Breast epithelium (tissue), 4 donors: ENCODE measurements at regions of chr1 and their contacts with region 1.

Region 1: GRCh38 chr1:174433451-174433850 is 14.3 kb upstream of the GPR52 start:
- DNase-seq: no peak
- H3K4me3 ChIP-seq: no peak overlapping the region
- H3K27ac ChIP-seq: no peak overlapping the region
- H3K4me1 ChIP-seq: no peaks in the 10 kb centered on the region
- H3K27me3 ChIP-seq: no peaks in the 10 kb centered on the region
- CTCF ChIP-seq: no peak
- POLR2A ChIP-seq: no peak

Region 2: GRCh38 chr1:172951730-172952365 is 1481.6 kb before region 1 on chr1:
- intact Hi-C with region 1: loop called (anchors 10 kb)
- DNase-seq: peak in 1 of 2 donors; percentile 39
- H3K4me3 ChIP-seq: no peak overlapping the region
- H3K27ac ChIP-seq: no peak overlapping the region
- H3K4me1 ChIP-seq: peaks cover 0 to 9% of the 10 kb centered on the region in 2 donors
- H3K27me3 ChIP-seq: no peaks in the 10 kb centered on the region
- CTCF ChIP-seq: no peak
- POLR2A ChIP-seq: no peak

Region 3: DNA sequence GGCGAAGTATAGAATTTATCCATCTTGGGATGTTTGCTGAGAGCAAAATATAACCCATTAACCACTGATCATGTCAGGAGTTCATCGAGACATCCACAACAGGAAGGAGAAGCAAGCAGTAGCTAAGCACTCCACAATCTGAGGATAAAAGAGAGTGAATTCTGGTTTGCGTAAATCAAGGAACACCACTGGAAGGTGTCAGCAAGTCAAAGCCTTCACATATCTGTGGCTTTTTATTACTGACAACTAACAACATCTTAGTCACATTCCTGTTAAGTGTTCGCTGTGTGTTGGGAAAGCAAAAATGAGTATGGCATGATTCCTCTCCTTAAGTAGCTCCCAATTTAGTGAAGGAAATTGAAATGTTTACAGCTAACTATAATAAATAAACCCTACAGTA is 653.5 kb before region 1 on chr1:
- intact Hi-C with region 1: no loop called
- DNase-seq: no peak
- H3K4me3 ChIP-seq: no peak overlapping the region
- H3K27ac ChIP-seq: no peak overlapping the region
- H3K4me1 ChIP-seq: no peaks in the 10 kb centered on the region
- H3K27me3 ChIP-seq: no peaks in the 10 kb centered on the region
- CTCF ChIP-seq: no peak
- POLR2A ChIP-seq: no peak

Region 4: DNA sequence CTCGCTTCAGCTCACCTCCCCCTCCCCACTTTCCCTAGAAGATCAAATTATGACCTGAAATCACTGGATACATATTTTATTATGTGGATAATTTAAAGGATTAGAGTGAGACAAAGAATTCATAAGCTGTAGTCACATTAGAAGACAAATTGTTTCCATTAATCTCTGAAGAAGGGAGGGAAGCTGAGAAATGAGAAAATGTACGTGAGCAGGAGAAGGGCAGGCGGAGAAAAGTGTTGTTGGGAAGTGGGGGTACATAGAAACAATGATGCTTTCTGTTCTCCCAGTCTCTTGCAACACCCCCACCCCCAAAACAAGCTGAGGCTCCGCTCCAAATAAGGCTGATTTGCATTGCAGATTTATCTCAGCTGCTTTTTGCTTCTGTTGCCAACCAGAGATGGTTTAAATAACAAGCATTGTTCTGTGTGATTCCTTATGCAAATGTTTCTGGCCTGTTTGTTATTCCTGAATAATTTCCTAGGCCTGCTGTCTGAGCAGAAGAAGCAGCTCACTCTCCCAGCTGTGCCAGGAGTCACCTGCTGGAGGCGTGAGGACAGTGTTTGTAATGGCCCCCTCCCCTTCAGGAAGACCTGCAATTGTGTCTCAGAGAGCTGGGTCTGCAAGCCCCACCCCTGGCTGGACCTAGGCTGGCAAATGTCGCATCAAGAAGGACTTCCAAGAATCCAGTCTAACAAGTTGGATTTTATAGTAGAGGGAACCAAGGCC is 1431.8 kb after region 1 on chr1:
- intact Hi-C with region 1: no loop called
- DNase-seq: no peak
- H3K4me3 ChIP-seq: no peak overlapping the region
- H3K27ac ChIP-seq: no peak overlapping the region
- H3K4me1 ChIP-seq: no peaks in the 10 kb centered on the region
- H3K27me3 ChIP-seq: no peaks in the 10 kb centered on the region
- CTCF ChIP-seq: no peak
- POLR2A ChIP-seq: no peak